ENCODE measurements at regions of chr6 and their contacts with region 1.

Region 1: GRCh38 chr6:53348371-53349208 is at the start of gene ELOVL5:
- DNase-seq: peak; percentile 91
- ATAC-seq: peak; percentile 65
- H3K4me3 ChIP-seq: peak within 1 kb of the TSS; percentile 96
- H3K27ac ChIP-seq: peak within 1 kb of the TSS; percentile 61
- H3K4me1 ChIP-seq: peaks cover 12% of the 10 kb centered on the region
- H3K27me3 ChIP-seq: no peaks in the 10 kb centered on the region
- CTCF ChIP-seq: no peak
- total RNA-seq, gene ELOVL5: 57.2 and 62.7 TPM in 2 replicates

Region 2: GRCh38 chr6:53112404-53112803 is 236.2 kb before region 1 on chr6:
- CTCF ChIA-PET with region 1: no interaction called
- POLR2A ChIA-PET with region 1: no interaction called
- intact Hi-C with region 1: loop called (anchors 1 kb)
- DNase-seq: peak; percentile 97
- ATAC-seq: peak; percentile 93
- H3K4me3 ChIP-seq: peak overlapping the region; percentile 52; the same call in 1 of the 2 replicates
- H3K27ac ChIP-seq: peak overlapping the region; percentile 96
- H3K4me1 ChIP-seq: peaks cover 38% of the 10 kb centered on the region
- H3K27me3 ChIP-seq: no peaks in the 10 kb centered on the region
- CTCF ChIP-seq: no peak

Region 3: DNA sequence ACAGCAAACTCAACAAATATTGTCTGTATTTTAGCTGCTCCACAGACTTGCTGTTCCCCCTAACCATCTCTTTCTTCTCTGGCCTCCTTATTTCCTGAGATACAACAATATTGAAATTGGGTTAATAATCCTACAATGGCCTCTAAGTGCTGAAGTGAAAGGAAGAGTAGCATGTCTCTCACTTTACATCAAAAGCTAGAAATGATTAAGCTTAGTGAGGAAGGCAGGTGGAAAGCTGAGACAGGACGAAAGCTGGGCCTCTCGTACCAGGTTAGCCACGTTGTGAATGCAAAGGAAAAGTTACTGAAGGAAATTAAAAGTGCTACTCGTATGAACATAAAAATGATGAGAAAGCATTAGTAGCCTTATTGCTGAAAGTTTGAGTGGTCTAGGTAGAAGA is 63.7 kb before region 1 on chr6:
- CTCF ChIA-PET with region 1: no interaction called
- POLR2A ChIA-PET with region 1: no interaction called
- intact Hi-C with region 1: no loop called
- DNase-seq: no peak
- ATAC-seq: no peak
- H3K4me3 ChIP-seq: no peak overlapping the region
- H3K27ac ChIP-seq: no peak overlapping the region
- H3K4me1 ChIP-seq: no peaks in the 10 kb centered on the region
- H3K27me3 ChIP-seq: no peaks in the 10 kb centered on the region
- CTCF ChIP-seq: no peak

Region 4: GRCh38 chr6:53326372-53327016 is 22.1 kb before region 1 on chr6:
- CTCF ChIA-PET with region 1: interaction called, 6 read pairs
- POLR2A ChIA-PET with region 1: interaction called, 3 read pairs
- intact Hi-C with region 1: loop called (anchors 1 kb)
- DNase-seq: peak; percentile 98
- ATAC-seq: peak; percentile 87
- H3K4me3 ChIP-seq: peak overlapping the region; percentile 42
- H3K27ac ChIP-seq: peak overlapping the region; percentile 95
- H3K4me1 ChIP-seq: peaks cover 55% of the 10 kb centered on the region
- H3K27me3 ChIP-seq: no peaks in the 10 kb centered on the region
- CTCF ChIP-seq: no peak

Region 5: GRCh38 chr6:53398247-53399026 is 49.8 kb after region 1 on chr6:
- CTCF ChIA-PET with region 1: no interaction called
- POLR2A ChIA-PET with region 1: interaction called, 4 read pairs
- intact Hi-C with region 1: loop called (anchors 2 kb)
- DNase-seq: peak; percentile 46
- ATAC-seq: peak; percentile 56
- H3K4me3 ChIP-seq: peak overlapping the region; percentile 46
- H3K27ac ChIP-seq: peak overlapping the region; percentile 80
- H3K4me1 ChIP-seq: peaks cover 28% of the 10 kb centered on the region
- H3K27me3 ChIP-seq: no peaks in the 10 kb centered on the region
- CTCF ChIP-seq: no peak

Region 6: GRCh38 chr6:53484476-53485280 is 136.1 kb after region 1 on chr6:
- CTCF ChIA-PET with region 1: no interaction called
- POLR2A ChIA-PET with region 1: no interaction called
- intact Hi-C with region 1: loop called (anchors 10 kb)
- DNase-seq: peak; percentile 87
- ATAC-seq: peak; percentile 43
- H3K4me3 ChIP-seq: peak overlapping the region; percentile 32; the same call in 1 of the 2 replicates
- H3K27ac ChIP-seq: no peak overlapping the region
- H3K4me1 ChIP-seq: peaks cover 12% of the 10 kb centered on the region; the same call in 1 of the 2 replicates
- H3K27me3 ChIP-seq: no peaks in the 10 kb centered on the region
- CTCF ChIP-seq: peak; percentile 95

Region 7: DNA sequence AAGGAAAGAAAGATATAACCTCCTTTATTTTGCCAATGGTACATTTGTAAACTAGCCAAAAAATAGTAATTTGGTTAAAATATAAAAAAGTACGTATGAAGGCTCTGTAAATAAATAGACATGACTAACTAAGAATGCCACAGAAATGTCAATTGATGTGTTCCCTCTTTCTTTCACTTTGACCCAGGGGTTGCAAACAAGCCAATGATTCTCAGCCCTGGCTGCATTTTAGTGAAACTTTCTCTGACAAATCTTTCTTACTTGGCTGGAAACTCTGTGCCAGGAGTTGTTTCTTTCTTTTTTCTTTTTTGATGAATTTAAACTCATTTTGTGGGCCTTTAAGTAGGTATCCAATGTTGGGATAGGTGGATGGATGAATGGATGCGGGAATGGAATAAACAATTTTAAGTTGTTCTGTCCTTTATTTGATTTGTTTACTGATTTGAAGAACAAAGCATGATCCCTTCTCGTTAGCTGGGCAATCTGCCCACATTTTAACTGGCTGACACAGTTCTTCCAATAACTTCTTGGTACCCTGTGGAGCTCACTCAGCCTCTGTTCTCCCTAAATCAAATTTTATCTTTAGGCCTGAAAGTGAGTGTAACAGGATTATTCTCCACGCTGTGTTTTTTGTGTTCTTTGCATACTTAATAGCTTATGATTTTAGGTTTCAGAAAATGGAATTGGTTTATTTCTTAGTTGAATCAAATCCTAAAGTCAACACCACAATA is 255.0 kb after region 1 on chr6:
- CTCF ChIA-PET with region 1: no interaction called
- POLR2A ChIA-PET with region 1: no interaction called
- intact Hi-C with region 1: no loop called
- DNase-seq: peak; percentile 27
- ATAC-seq: 0 out of 2 replicates have a peak, but pooled peaks have one; percentile 29
- H3K4me3 ChIP-seq: no peak overlapping the region
- H3K27ac ChIP-seq: no peak overlapping the region
- H3K4me1 ChIP-seq: peaks cover 8% of the 10 kb centered on the region; the same call in 1 of the 2 replicates
- H3K27me3 ChIP-seq: no peaks in the 10 kb centered on the region
- CTCF ChIP-seq: no peak

Measured in PC-3 (cell line).